Cardiac septum (tissue), 1 donor: ENCODE measurements at regions of chr3 and their contacts with region 1.

Region 1: DNA sequence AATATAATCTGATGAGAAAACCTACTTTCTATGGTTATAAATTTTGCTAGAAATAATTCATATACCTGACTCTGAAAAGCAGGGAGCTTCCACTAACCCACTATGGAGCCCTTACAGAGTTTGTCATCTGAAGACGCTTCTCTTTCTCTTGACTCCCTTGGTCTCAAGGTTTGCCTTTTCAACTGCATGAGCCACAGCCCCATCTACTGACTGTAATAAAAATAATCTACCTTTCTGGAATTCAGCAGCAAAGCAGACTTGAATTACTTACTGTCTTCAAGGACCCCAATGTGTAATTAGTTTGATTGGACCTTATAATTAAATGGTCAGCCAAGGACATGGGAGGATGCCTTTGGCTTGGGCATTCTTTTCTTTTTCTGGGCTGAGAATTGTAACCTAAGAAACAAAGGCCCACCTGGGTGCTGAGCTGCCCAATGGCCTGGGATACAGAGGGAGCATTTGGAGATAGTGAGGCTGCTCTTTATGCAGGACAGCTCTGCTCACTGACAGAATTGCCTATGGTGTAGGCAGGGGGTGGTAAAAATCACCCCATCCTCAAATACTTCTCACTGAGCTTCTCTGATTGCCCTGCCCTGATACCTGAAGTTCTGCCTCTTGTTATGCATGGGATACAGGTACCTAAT is 178.6 kb upstream of the TRIM42 start:
- DNase-seq: no peak

Region 2: DNA sequence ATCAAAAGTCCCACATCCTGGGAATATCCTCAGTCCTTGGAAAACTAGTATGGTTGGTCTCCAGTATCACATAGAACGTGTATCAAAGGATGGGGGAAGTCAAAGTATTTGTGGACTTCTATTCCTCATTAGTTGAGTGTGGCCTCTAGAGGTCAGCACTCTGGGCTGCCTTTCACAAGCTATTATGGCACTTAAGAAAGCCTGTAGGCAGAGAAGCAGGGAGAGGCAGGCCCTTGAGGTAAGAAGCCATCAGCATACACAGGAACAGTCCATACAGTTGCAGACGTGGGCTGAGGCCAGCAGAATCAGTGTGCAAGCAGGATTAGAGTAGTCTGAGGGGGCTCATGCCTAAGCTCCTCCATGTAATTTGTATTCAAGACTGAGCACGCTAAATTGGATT is 222.5 kb before region 1 on chr3:
- intact Hi-C with region 1: loop called (anchors 10 kb)
- DNase-seq: no peak

Region 3: GRCh38 chr3:140552898-140553297 is 53.7 kb after region 1 on chr3:
- intact Hi-C with region 1: no loop called
- DNase-seq: no peak